AG04450 (cell line): ENCODE measurements at regions of chr2 and their contacts with region 1.

Region 1: DNA sequence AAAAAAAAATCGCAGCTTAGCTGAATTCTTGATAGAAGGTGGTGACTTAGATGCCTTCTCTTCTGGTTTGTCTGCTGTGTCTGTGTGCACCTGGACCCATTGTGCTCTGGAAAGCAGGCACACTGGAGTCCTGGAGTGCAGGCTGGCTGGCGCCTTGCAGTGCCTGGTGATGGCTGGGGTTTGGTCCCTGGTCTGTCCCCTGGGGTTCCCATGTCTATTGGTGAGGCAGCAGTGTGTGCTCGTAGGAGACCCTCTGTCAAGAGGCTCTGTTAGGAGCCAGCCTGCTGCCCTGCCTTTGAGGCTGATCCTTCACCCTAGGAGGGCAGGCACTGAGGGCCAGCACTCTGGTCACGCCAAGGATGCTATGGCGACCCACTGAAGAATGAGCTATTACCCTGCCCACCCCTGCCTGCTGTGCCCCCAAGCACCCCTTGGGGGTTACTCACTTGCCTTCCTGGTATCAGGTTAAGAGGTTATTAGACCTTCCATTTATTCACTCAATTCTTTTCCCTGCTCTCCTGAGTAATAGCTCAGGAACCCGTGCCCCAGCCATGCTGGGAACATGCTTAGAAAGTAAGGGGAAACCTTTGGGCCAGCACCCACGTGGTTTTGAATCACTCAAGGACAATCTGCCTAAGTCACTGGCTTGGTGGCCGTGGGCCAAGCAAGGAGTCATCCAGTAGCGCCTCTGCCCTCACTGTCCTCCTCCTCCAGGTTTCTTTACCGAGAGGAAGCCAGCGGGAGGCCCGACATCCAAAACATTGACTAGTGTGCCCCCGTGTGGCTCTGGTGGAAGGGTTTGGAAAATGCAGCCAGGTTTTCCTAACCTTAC is 284.5 kb downstream of the PRKCE start:
- DNase-seq: peak; percentile 93
- H3K4me3 ChIP-seq: no peak overlapping the region
- H3K27ac ChIP-seq: peak overlapping the region; percentile 49
- H3K27me3 ChIP-seq: no peaks in the 10 kb centered on the region
- CTCF ChIP-seq: peak; percentile 85

Region 2: DNA sequence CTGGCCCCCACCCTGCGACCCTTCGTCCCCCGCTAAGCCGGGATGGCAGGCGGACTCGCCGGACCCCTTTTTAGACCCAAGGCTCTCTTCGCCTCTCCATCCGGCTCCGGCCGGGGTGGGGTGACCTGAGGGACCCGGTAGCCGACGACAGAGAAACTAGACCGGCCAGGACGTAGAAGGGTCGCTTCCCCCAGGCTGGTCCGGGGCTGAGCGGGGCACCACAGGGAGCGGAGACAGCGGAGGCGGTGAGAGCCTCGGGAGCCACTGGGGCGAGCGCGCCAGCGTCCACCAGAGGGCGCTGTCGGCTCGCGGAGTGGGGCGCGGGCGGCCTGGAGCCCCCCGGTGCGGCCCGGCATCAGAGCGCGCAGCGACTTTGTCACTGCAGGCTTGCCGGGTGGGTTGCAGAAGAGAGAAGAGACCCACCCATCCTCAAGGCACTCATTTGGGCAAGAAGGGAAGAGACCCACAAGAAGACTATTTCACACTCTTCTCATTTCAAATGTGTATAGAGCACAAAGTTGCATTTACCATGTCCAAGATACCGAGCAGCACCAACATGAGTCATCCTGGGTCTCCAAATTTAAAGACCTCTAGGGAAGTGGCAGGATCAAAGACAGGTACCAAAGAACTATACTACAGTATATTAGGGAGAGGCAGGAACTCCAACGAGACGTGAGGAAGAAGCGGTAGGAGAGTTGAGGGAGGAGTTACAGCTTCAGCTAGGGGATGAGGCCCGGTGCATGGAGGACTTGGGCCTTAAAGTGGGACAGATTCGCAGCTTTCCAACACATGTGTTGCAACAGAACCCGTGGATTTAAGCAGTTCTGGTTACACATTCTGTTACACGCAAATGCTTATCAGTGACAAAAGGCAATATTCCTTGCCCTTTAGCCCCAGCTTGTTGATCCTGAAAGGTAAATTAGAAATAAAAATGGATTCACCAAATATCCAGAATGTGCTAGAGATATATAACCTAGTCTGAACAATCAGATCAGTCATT is 292.2 kb before region 1 on chr2:
- CTCF ChIA-PET with region 1: interaction called, 14 read pairs
- POLR2A ChIA-PET with region 1: no interaction called
- DNase-seq: no peak
- H3K4me3 ChIP-seq: peak overlapping the region; percentile 69
- H3K27ac ChIP-seq: no peak overlapping the region
- H3K27me3 ChIP-seq: peaks cover 23% of the 10 kb centered on the region
- CTCF ChIP-seq: peak; percentile 80

Region 3: DNA sequence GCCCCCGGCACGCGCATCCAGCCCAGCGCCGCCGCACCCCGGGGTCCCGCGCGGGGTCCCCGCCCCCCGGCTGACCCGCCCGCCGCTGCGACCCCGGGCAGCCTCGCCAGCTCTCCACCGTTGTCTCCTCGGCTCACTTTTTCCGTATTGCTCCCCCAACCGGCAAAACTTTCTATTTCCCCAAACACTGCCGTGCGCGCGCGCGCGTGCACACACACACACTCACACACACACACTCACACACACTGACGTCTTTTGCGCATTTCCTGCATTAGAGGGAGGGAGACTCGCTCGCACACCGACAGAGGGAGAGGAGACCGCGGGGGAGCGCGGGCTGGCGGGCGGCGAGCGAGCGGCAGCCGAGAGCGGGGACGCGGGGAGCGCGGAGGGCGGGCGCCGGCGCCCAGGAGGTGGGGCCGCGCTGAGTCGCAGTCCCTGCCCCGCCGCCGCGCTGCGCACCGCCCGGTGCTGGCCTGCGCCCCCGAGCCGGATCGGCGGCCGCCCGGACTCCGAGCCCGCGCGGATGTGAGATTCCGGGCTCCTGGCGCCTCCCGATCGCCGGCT is 285.1 kb before region 1 on chr2:
- CTCF ChIA-PET with region 1: interaction called, 15 read pairs
- POLR2A ChIA-PET with region 1: no interaction called
- DNase-seq: peak; percentile 97
- H3K4me3 ChIP-seq: peak overlapping the region; percentile 78
- H3K27ac ChIP-seq: peak overlapping the region; percentile 68
- H3K27me3 ChIP-seq: no peaks in the 10 kb centered on the region
- CTCF ChIP-seq: peak; percentile 51

Region 4: DNA sequence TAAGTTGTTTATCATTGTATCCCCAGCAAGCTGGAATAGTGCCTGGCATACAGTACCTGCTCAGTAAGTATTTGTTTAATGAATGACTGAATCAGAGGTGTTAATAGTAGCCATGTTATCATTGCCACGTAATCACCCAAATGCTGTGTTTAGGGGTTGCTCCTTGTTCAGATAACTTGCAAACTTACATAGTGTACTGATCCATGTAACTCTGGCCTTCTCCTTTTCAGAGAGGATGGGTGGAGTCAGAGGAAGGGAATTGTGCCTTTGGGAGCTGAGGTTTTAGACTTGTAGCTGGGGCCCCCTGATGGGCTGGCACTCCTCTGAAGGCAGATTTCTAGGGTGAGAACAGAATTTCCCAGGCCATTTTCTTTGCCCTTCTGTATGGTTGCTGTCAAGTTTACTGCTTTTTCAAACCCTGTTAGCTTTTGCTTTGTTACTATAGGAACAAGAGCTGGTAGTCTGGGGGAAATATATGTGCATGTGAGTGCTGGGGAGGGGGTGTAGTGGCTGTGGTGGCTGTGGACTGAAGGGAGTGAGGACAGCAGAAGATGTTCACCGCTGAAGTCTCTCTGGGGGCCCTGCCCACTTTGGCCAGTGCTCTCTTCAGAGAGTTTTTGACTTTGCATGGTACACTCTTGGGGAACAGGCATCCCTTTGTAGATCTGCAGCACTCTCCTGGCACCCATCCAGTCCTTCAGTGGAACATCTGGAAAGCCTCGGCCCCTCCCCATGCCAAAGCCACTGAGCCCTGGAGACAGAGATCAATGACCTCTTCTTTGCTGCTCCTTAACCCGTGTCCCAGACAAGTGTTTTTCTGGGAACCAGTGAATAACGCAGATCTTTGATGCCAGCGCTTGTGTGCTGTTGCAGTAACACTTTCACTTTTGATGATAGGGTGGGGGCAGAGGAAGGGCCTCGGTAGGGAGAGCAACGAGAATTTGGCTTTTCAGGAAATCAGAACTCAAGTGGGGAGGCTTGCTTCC is 75.6 kb before region 1 on chr2:
- CTCF ChIA-PET with region 1: no interaction called
- POLR2A ChIA-PET with region 1: no interaction called
- DNase-seq: no peak
- H3K4me3 ChIP-seq: peak overlapping the region; percentile 36
- H3K27ac ChIP-seq: no peak overlapping the region
- H3K27me3 ChIP-seq: no peaks in the 10 kb centered on the region
- CTCF ChIP-seq: no peak; the same call in 1 of the 2 replicates